T-cell (primary cell): ENCODE measurements at regions of chr1 and their contacts with region 1.

Region 1: DNA sequence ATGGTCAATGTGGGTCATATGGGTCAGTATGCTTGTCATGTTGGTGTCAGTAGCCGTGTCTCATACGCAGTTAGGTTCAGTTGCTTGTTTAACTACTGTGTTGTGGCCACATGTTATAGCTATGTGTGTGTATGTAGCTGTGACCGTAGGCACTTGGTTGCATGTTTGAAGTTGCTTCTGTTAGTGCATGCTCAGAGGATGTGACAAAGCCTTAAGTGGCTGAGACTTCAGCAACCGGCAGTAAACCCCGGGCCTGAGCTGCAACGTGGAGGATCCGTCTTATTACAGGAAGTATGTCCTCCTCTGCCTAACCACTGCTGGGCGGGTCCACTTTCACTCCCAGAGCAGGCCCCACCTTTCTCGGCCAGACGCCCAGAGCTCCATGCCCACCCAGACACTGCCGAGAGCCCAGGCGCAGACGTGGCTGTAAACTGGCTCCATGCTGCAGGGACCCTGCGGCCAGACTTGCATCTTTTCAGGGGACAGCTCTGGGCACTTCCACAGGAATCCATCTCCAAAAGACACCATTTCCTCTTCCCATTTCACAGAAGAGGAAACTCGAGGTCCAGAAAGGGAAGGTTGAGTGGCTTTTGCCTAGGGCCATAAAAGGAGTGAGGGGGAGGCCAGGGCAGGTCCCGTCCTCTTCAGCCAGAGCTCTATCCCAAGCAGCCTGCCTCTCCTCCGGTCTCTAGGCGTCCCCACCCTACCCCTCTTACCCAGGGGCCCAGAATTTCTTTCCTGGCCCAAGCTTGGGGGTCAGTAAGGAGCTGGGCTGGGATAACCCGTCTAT is 2.1 kb downstream of the TCEA3 start:
- DNase-seq: peak; percentile 21 to 71 (median 48)
- ATAC-seq: peak; percentile 77 to 89 (median 84)
- H3K4me3 ChIP-seq: peak overlapping the region; percentile 5 to 72
- H3K4me3 Mint-ChIP-seq: peak overlapping the region; percentile 83 to 87 (median 86)
- H3K27ac ChIP-seq: peak overlapping the region; percentile 55
- H3K27ac Mint-ChIP-seq: peak overlapping the region; percentile 67 to 93
- H3K4me1 ChIP-seq: peaks cover 19 to 35% of the 10 kb centered on the region in 2 experiments
- H3K4me1 Mint-ChIP-seq: peaks cover 29 to 35% (median 31%) of the 10 kb centered on the region in 3 donors
- H3K27me3 ChIP-seq: peaks cover 0 to 40% of the 10 kb centered on the region in 2 experiments
- H3K27me3 Mint-ChIP-seq: peaks cover 0 to 6% of the 10 kb centered on the region in 2 donors

Region 2: DNA sequence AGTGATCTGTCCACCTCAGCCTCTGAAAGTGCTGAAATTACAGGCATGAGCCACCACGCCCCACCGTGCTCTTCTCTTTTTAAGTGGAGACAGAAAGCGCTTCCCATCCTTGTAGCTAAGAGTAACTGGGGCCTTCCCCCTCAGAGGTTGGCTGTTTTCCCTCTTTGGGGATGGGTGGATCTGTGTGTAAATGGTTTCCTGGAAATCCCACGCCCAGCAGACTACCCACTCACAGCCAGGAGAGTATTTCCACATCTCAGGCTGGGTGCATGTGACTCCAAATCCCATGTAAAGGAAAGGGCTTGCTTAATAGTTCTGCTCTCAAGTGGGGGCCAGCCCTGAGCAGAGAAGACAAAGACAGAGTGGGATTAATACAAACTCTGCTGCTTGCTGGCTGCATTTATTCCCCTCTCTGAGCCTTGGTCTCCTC is 21.7 kb after region 1 on chr1:
- CTCF ChIA-PET with region 1: no interaction called
- POLR2A ChIA-PET with region 1: no interaction called
- DNase-seq: no peak
- ATAC-seq: no peak
- H3K4me3 ChIP-seq: no peak overlapping the region
- H3K4me3 Mint-ChIP-seq: no peak overlapping the region
- H3K27ac ChIP-seq: no peak overlapping the region
- H3K27ac Mint-ChIP-seq: no peak overlapping the region
- H3K4me1 ChIP-seq: no peaks in the 10 kb centered on the region
- H3K4me1 Mint-ChIP-seq: no peaks in the 10 kb centered on the region
- H3K27me3 ChIP-seq: peaks cover 0 to 12% of the 10 kb centered on the region in 2 experiments
- H3K27me3 Mint-ChIP-seq: no peaks in the 10 kb centered on the region

Region 3: DNA sequence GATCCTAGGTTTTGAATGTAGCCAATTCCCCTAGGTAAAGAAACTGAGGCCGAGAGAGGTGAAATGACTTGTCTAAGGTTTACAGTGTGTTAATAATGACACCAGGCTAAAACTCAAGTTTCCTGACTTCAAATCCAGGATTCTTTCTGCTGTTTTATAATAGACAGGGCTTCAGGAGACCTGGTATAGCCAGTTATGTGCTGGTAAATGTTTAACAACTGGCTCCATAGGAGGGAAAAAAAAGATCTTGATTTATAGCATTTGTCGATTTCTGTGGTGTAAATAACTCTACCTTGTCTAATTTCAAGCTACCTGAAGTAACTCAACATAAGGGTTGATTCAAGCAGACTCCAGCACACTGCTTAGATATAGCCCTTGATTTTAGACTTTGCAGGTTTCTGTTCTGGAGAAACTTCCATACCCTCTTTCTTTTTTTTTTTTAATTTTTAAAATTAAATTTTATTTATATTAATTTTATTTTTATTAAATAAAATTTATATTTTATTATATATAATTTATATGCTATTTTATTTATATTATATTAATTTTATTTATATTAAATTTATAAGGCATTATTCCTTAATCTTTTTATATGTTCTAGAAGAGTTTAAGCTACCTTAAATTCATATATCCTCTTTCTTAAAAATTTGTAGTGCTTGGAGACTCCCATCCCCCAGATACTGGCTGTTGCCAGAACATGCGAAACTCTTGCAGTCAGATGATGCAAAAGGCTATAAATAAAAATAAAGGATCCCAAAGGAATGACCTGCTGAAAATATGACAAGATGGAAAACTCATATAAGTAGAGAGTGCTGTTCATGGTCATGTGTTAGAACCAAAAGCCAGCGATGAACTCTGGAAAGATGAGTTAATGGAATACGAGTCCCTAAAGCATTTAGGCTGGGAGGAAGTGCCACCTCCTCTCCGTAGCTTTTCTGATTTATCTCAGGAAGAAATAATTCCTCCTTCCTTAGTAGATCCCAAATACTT is 593.1 kb after region 1 on chr1:
- CTCF ChIA-PET with region 1: no interaction called
- POLR2A ChIA-PET with region 1: interaction called in 1 of 2 experiments, 10 read pairs
- DNase-seq: no peak
- ATAC-seq: no peak
- H3K4me3 ChIP-seq: no peak overlapping the region
- H3K4me3 Mint-ChIP-seq: no peak overlapping the region
- H3K27ac ChIP-seq: no peak overlapping the region
- H3K27ac Mint-ChIP-seq: no peak overlapping the region
- H3K4me1 ChIP-seq: no peaks in the 10 kb centered on the region
- H3K4me1 Mint-ChIP-seq: no peaks in the 10 kb centered on the region
- H3K27me3 ChIP-seq: peaks cover 0 to 11% of the 10 kb centered on the region in 2 experiments
- H3K27me3 Mint-ChIP-seq: peaks cover 0 to 5% of the 10 kb centered on the region in 2 donors